Breast epithelium (tissue), 4 donors: ENCODE measurements at regions of chr9 and their contacts with region 1.

Region 1: DNA sequence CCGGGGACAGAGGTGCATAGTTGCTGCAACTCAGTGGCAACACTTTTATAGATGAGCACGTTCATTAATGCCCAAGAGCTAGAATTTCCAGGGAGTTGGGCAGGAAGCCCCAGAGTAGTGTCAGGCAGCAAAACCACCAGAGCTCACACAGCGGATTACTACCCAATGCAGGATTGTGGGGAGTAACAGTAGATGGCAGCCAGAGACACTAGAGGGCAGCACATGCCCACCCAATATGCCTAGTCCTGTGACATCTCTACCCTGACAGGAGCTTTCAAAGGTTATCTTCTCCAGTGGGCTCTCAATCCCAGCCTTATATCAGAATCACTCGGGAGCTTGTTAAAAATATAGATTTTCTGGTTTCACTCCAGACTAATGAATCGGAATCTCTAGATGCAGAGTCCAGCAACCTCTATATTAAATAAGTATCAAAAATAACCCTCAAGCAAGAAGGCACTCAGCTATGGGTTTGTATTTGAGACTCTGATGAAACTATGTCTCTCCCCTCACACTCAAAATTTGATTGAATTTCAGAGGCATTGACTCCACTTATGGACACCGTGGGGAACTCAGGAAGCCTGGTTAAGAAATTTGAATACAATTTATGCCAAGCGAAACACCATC is 58.4 kb upstream of the PHF24 start:
- DNase-seq: peak; percentile 59 to 61
- H3K4me3 ChIP-seq: no peak overlapping the region
- H3K27ac ChIP-seq: no peak overlapping the region
- H3K4me1 ChIP-seq: no peaks in the 10 kb centered on the region
- H3K27me3 ChIP-seq: peaks cover 0 to 8% of the 10 kb centered on the region in 2 donors
- CTCF ChIP-seq: peak in 2 of 3 donors; percentile 65 to 80
- POLR2A ChIP-seq: no peak

Region 2: GRCh38 chr9:34961574-34962490 is 62.2 kb after region 1 on chr9:
- intact Hi-C with region 1: loop called (anchors 10 kb)
- DNase-seq: no peak
- H3K4me3 ChIP-seq: no peak overlapping the region
- H3K27ac ChIP-seq: no peak overlapping the region
- H3K4me1 ChIP-seq: no peaks in the 10 kb centered on the region
- H3K27me3 ChIP-seq: peaks cover 0 to 6% of the 10 kb centered on the region in 2 donors
- CTCF ChIP-seq: no peak
- POLR2A ChIP-seq: no peak

Region 3: DNA sequence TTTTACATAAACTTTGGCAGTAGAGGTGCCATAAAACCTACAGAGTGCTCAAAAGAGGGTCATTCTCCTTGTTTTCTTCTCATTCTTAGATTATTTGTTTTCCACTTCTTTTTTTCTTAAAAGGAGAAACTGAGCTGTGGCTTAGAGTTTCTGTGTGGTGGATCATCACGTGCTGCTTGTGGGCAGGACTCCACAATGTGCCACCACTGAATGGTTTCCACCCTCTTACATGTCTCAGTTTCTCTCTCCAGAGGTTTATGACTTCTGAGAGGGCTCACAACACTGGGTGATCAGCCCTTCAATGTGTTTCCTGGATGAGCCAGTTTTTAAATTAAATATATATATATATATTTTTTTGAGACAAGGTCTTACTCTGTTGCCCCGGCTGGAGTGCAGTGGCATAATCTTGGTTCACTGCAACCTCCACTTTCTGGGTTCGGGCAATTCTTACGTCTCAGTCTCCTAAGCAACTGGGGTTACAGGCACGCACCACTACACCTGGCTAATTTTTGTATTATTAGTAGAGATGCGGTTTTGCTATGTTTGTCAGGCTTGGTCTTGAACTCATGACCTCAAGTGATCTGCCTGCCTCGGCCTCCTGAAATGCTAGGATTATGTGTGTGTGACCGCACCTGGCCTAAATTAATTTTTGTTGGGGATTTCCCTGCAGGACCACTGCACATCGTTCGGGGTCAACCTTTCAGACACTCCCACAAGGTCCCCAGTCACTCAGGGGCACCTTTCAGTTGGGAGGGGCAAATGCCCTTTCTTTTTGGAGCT is 259.0 kb after region 1 on chr9:
- intact Hi-C with region 1: loop called (anchors 5 kb)
- DNase-seq: no peak
- H3K4me3 ChIP-seq: no peak overlapping the region
- H3K27ac ChIP-seq: no peak overlapping the region
- H3K4me1 ChIP-seq: peaks cover 0 to 3% of the 10 kb centered on the region in 2 donors
- H3K27me3 ChIP-seq: no peaks in the 10 kb centered on the region
- CTCF ChIP-seq: no peak
- POLR2A ChIP-seq: no peak